PC-9 (cell line): ENCODE measurements at regions of chr17 and their contacts with region 1.

Region 1: DNA sequence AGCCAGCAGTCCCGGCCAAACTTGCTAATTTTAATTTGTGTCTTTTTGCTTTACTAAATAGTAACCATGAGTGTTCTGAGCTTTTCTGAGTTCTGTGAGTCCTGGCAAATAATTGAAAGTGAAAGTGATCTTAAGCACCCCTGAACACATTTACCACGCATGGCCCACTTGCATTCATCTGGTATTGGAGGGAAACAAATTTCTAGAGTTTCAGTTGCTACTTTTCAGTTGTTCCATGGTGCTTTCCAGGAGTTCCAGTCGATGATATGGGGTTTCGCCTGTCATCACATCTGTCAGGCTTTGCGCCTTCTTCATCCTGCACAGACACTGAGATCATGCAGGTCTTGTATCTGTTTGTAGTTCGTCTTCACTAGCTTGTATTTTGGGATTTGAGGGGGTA is 44.1 kb downstream of the CRLF3 start:
- DNase-seq: no peak
- H3K4me3 ChIP-seq: no peak overlapping the region
- H3K27ac ChIP-seq: no peak overlapping the region
- H3K4me1 ChIP-seq: no peaks in the 10 kb centered on the region
- H3K27me3 ChIP-seq: no peaks in the 10 kb centered on the region
- CTCF ChIP-seq: no peak

Region 2: GRCh38 chr17:30363715-30364202 is 416.6 kb before region 1 on chr17:
- CTCF ChIA-PET with region 1: no interaction called
- POLR2A ChIA-PET with region 1: interaction called, 36 read pairs
- intact Hi-C with region 1: no loop called
- DNase-seq: peak; percentile 54 to 98
- H3K4me3 ChIP-seq: no peak overlapping the region
- H3K27ac ChIP-seq: peak overlapping the region; percentile 96
- H3K4me1 ChIP-seq: peaks cover 36% of the 10 kb centered on the region
- H3K27me3 ChIP-seq: no peaks in the 10 kb centered on the region
- CTCF ChIP-seq: no peak

Region 3: DNA sequence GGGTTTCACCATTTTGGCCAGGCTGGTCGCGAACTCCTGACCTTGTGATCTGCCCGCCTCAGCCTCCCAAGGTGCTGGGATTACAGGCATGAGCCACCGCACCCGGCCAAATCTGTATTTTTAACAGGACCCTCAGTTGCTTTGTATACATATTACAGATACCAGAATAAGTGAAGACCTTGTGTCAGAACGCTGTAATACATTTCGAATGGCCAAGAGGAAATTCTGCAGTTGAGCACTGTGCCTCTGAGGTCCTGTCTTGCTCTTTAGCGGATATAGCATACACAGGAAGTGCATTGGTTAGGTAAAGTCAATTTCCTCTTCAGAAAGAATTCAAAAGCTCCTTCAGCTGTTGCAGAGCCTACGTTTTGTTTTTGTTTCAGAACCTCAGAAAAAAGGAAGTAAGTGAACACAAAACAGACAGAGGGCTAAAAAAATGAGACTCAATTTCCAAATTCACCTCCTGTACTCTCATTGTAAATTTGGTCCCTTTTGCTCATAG is 28.5 kb after region 1 on chr17:
- CTCF ChIA-PET with region 1: no interaction called
- POLR2A ChIA-PET with region 1: no interaction called
- intact Hi-C with region 1: no loop called
- DNase-seq: no peak
- H3K4me3 ChIP-seq: no peak overlapping the region
- H3K27ac ChIP-seq: no peak overlapping the region
- H3K4me1 ChIP-seq: no peaks in the 10 kb centered on the region
- H3K27me3 ChIP-seq: no peaks in the 10 kb centered on the region
- CTCF ChIP-seq: no peak

Region 4: DNA sequence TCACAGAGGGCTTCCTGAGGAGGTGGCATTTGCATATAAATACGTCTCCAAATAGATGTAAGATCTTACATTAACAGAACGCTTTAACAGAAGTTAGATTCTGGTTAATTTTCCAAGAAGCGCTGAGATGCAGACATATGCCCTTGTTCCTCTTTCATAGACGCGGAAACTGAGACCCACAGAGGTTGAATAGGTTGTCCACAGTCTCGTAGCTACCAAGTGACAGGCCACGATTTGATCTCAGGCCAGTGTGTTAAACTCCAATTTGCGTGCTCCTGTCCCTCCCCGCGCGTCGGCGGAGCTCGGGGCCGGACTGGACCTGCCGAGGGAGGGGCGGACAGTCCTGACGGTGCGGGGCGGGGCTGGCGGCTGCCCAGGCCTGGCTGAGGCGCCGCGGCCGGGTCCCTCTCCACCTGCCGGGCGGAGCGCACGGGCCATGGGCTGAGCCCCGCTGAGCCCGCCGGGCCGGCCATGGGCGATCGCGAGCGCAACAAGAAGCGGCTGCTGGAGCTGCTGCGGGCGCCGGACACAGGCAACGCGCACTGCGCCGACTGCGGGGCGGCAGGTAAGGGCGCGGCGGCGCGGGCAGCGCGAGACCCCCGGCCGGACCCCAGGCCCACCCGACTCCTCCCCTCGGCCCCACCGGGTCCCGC is 141.3 kb after region 1 on chr17 and contains the start of gene ADAP2:
- CTCF ChIA-PET with region 1: no interaction called
- POLR2A ChIA-PET with region 1: no interaction called
- intact Hi-C with region 1: no loop called
- DNase-seq: peak in 1 of 2 experiments; percentile 54
- H3K4me3 ChIP-seq: peak within 1 kb of the TSS; percentile 42; the same call in 1 of the 2 replicates
- H3K27ac ChIP-seq: no peak within 1 kb of the TSS
- H3K4me1 ChIP-seq: no peaks in the 10 kb centered on the region
- H3K27me3 ChIP-seq: peaks cover 37% of the 10 kb centered on the region
- CTCF ChIP-seq: no peak
- total RNA-seq, gene ADAP2: 0.76 and 1.4 TPM in 2 replicates

Region 5: GRCh38 chr17:30996481-30996880 is 216.1 kb after region 1 on chr17:
- CTCF ChIA-PET with region 1: no interaction called
- POLR2A ChIA-PET with region 1: no interaction called
- intact Hi-C with region 1: no loop called
- DNase-seq: no peak
- H3K4me3 ChIP-seq: no peak overlapping the region
- H3K27ac ChIP-seq: no peak overlapping the region
- H3K4me1 ChIP-seq: no peaks in the 10 kb centered on the region
- H3K27me3 ChIP-seq: no peaks in the 10 kb centered on the region
- CTCF ChIP-seq: no peak